AG04450 (cell line): ENCODE measurements at regions of chr1 and their contacts with region 1.

Region 1: DNA sequence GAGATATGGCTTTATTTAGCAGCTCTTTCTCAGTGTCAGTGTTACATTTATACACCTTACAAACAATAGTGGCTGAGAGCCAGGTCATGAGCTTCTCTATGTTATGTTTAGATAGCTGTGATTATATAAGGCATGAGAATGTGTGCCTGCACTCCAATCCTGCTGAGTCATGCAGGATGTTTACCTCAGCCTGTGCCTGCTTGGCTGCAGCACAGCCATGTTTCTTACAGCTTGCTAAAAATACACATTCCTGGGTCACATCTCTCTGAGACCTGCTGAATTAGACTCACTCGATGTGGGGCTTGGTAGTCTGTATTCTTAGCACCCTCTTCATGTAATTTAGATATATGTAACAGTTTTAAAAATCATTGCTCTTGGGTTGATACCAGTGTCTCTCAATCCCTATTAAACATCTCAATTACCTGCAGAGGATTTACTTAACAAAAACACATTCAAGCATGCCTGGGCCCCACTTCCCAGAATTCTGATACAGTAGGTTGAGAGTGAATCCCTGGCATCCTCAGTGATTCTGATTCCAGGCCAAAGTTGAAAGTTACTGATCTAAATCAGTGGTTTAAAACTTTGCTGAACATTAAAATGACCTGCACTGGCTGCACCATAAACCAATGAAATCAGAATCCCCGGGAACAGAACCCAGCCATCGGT is 107.5 kb downstream of the GDAP2 start:
- DNase-seq: peak; percentile 97
- H3K4me3 ChIP-seq: no peak overlapping the region
- H3K27ac ChIP-seq: peak overlapping the region; percentile 99
- H3K27me3 ChIP-seq: no peaks in the 10 kb centered on the region
- CTCF ChIP-seq: no peak

Region 2: GRCh38 chr1:117860896-117861610 is 39.1 kb after region 1 on chr1:
- CTCF ChIA-PET with region 1: interaction called, 3 read pairs
- POLR2A ChIA-PET with region 1: interaction called, 10 read pairs
- DNase-seq: peak; percentile 76
- H3K4me3 ChIP-seq: no peak overlapping the region
- H3K27ac ChIP-seq: no peak overlapping the region
- H3K27me3 ChIP-seq: no peaks in the 10 kb centered on the region
- CTCF ChIP-seq: no peak